Mammary epithelial cell (primary cell): ENCODE measurements at regions of chr15 and their contacts with region 1.

Region 1: GRCh38 chr15:89358755-89359439 is 24.3 kb upstream of the POLG start:
- DNase-seq: peak; percentile 64
- H3K4me3 ChIP-seq: peak overlapping the region in 2 of 3 experiments; percentile 47 to 51
- H3K27ac ChIP-seq: no peak overlapping the region
- H3K4me1 ChIP-seq: peaks cover 8% of the 10 kb centered on the region
- H3K27me3 ChIP-seq: peaks cover 48% of the 10 kb centered on the region
- CTCF ChIP-seq: peak; percentile 19 to 77

Region 2: GRCh38 chr15:89406940-89407607 is 48.2 kb after region 1 on chr15:
- CTCF ChIA-PET with region 1: no interaction called
- dilution Hi-C with region 1: loop called (anchors 5 kb)
- in situ Hi-C with region 1: no loop called
- intact Hi-C with region 1: no loop called
- DNase-seq: no peak
- H3K4me3 ChIP-seq: no peak overlapping the region
- H3K27ac ChIP-seq: no peak overlapping the region
- H3K4me1 ChIP-seq: peaks cover 12% of the 10 kb centered on the region
- H3K27me3 ChIP-seq: peaks cover 70% of the 10 kb centered on the region
- CTCF ChIP-seq: peak in 1 of 2 donors; percentile 1

Region 3: DNA sequence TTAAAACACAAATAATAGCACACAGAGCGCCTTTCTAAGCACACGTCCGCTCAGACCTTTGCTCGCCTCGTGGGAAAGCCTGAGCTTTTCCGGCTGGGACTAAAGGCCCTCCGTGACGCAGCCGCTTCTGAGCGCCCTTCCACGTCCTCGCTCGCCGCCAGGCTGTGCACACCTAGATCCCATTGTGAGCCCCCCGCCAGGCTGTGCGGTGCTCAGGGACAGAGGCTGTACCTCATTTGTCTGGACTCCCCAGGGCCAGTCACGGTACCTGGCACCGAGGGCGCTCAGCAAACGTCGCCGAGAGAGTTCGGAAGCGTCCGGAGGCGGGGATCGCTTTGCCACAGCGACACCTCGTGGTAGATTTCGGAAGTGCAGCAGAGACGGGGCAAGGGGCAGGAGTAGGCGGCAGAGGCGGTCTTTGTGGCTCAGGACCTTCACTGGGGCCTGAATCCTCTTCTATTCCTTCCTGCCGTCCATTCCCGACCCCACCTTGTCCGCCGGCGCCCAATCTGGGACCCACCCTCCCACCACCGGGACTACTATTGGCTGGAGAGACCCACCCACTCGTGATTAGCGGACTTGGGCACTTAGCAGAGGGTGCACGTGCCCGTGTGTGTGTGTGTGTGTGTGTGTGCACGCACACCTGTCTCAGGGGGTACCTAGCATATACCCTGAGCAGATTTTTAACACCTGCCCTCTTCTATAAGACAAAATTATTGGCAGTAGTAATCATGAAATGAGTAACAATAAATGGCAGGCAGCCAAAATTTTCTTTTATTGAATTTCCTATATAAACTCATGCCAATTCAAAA is 71.8 kb after region 1 on chr15:
- CTCF ChIA-PET with region 1: interaction called, 9 read pairs
- dilution Hi-C with region 1: loop called (anchors 5 kb)
- in situ Hi-C with region 1: loop called in 1 of 2 experiments (anchors 5 kb)
- intact Hi-C with region 1: loop called (anchors 1 kb)
- DNase-seq: peak; percentile 60
- H3K4me3 ChIP-seq: peak overlapping the region in 2 of 3 experiments; percentile 37 to 39
- H3K27ac ChIP-seq: no peak overlapping the region
- H3K4me1 ChIP-seq: peaks cover 7% of the 10 kb centered on the region
- H3K27me3 ChIP-seq: no peaks in the 10 kb centered on the region
- CTCF ChIP-seq: peak; percentile 88 to 93

Region 4: DNA sequence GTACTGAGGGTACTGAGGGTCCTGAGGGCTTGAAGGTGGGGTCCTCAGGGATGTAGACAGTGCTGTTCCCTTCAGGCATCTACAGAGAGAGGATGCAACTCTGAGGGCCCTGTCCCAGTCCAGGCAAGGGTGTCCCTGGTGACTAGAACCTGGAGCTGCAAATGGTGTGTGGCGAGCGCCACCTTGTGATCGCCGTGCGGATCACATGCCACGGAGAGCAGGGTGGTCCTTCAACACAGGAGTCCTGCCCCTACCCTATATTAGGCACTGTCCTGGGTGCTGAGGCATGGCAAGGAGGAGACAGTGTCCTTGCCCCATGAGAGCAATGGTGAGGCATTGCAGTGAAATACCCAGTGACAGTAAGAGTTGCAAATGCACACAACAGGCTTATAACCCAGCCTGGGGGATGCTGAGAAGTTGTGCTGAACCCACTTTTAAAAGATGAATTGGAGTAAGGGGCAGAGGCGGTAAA is 113.9 kb after region 1 on chr15:
- CTCF ChIA-PET with region 1: interaction called, 10 read pairs
- dilution Hi-C with region 1: loop called (anchors 5 kb)
- in situ Hi-C with region 1: loop called in 1 of 2 experiments (anchors 5 kb)
- intact Hi-C with region 1: loop called (anchors 1 kb)
- DNase-seq: peak; percentile 37
- H3K4me3 ChIP-seq: no peak overlapping the region
- H3K27ac ChIP-seq: no peak overlapping the region
- H3K4me1 ChIP-seq: peaks cover 8% of the 10 kb centered on the region
- H3K27me3 ChIP-seq: peaks cover 4% of the 10 kb centered on the region
- CTCF ChIP-seq: peak; percentile 80 to 92